OCI-LY7 (cell line): ENCODE measurements at regions of chr1 and their contacts with region 1.

Region 1: DNA sequence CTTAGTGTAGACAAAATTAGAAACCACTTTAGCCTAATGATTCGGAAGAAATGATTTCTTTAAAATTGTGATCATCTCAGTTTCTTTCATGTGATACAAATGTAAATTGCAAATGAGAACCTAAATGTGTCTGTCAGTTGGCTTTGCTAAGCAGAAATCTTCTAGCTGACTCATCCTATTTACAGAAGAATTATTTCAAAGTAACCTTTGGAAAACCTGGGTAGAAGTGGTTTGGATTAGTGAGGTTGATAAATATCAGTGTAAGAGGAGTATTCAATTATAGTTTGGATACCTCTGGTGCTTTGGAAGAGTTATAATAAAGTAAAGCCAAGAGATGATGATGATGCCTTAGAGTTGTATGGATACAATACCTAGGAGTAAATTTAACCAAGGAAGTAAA is 37.4 kb downstream of the CC2D1B start:
- DNase-seq: no peak
- H3K4me3 ChIP-seq: no peak overlapping the region
- H3K27ac ChIP-seq: no peak overlapping the region
- H3K4me1 ChIP-seq: no peaks in the 10 kb centered on the region
- CTCF ChIP-seq: no peak

Region 2: DNA sequence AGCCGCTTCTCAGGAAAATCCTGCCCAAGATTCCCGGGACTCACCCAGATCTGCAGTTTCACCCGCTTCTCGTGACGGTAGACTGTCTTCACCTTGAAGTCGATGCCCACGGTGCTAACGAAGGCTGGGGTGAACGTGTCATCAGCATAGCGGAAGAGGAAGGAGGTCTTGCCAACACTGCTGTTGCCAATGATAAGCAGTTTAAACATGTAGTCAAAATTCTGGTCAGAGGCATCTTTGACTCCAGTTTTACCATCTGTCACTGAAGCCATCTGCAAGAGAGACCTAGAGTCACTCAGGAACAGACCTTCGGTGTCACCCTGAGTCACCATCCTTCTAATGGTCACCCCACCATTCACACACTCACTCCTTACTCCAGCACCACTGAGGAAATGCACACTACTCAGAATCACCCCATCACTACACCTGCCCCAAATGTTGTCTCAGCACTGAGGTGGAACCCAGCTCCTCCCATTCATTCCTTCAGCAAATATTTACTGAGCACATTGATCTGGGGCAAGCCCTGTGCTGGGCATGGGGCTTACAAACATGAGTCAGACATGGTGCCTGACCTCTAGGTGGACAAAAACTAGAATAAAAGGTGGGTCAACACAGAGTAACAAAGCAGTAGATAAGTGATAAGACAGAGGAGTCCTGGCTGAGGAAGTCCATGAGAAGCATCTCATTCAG is 351.6 kb before region 1 on chr1:
- CTCF ChIA-PET with region 1: no interaction called
- POLR2A ChIA-PET with region 1: no interaction called
- intact Hi-C with region 1: no loop called
- DNase-seq: no peak
- H3K4me3 ChIP-seq: no peak overlapping the region
- H3K27ac ChIP-seq: no peak overlapping the region
- H3K4me1 ChIP-seq: peaks cover 4% of the 10 kb centered on the region
- CTCF ChIP-seq: no peak

Region 3: DNA sequence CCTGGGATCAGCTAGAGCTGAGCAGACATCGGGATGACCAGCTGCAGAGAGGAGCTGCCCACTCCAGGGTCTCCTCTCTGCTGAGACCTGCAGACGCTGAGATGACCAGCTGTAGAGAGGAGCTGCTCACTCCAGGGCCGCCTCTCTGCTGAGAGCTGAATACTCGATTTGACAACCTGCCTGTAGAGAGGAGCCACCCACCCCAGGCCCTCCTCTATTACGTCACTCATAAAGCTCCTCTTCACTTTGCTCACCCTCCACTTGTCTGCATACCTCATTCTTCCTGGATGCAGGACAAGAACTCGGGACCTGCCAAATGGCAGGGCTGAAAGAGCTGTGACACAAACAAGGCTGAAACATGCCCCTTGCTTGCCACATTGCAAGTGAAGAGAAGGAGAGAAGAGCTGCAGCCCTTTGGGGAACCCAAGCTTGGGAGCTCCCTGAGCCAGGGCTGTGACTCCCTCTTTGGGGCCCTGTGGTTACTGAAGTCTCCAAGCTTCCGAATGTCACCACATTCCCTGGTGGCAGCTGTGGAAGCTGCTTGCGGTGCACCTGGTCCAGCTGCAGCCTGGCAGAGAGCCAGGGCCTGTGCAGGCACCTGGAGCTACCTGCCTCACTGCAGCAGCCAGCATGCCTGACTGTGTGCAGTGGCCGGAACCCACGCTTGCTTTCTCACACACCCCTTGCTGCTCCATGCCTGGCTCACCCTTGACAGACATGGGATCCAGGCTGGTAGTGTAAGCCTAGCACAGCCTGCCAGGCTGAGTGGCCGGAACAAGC is 22.2 kb before region 1 on chr1:
- CTCF ChIA-PET with region 1: no interaction called
- POLR2A ChIA-PET with region 1: no interaction called
- intact Hi-C with region 1: no loop called
- DNase-seq: peak; percentile 35
- H3K4me3 ChIP-seq: no peak overlapping the region
- H3K27ac ChIP-seq: no peak overlapping the region
- H3K4me1 ChIP-seq: no peaks in the 10 kb centered on the region
- CTCF ChIP-seq: no peak

Region 4: DNA sequence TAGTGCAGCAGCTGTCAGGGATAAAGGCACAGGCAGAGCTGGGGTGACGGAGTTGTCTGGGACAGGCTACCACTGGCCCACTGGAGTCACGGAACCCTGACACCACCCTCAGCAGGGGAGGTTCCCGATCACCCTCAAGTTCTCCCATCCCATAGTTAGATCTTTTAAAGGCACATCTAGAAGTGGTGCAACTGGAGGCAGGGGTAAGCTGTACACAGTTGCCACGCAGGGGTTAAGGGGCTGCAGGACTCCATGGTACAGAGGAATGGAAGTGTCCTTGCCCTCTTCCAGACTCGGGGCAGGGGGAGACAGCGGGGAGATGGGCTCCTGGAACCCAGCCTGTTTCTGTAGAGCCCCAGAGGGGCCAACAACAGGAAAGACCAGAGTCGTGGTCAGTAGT is 24.1 kb after region 1 on chr1:
- CTCF ChIA-PET with region 1: interaction called, 3 read pairs
- POLR2A ChIA-PET with region 1: interaction called, 3 read pairs
- intact Hi-C with region 1: loop called (anchors 2 kb)
- DNase-seq: no peak
- H3K4me3 ChIP-seq: no peak overlapping the region
- H3K27ac ChIP-seq: no peak overlapping the region
- H3K4me1 ChIP-seq: no peaks in the 10 kb centered on the region
- CTCF ChIP-seq: no peak

Region 5: GRCh38 chr1:52756020-52756419 is 427.4 kb after region 1 on chr1:
- CTCF ChIA-PET with region 1: no interaction called
- POLR2A ChIA-PET with region 1: no interaction called
- intact Hi-C with region 1: no loop called
- DNase-seq: no peak
- H3K4me3 ChIP-seq: no peak overlapping the region
- H3K27ac ChIP-seq: no peak overlapping the region
- H3K4me1 ChIP-seq: peaks cover 10% of the 10 kb centered on the region
- CTCF ChIP-seq: no peak